Naive thymus-derived CD4-positive, alpha-beta T cell (primary cell): ENCODE measurements at regions of chr22 and their contacts with region 1.

Region 1: DNA sequence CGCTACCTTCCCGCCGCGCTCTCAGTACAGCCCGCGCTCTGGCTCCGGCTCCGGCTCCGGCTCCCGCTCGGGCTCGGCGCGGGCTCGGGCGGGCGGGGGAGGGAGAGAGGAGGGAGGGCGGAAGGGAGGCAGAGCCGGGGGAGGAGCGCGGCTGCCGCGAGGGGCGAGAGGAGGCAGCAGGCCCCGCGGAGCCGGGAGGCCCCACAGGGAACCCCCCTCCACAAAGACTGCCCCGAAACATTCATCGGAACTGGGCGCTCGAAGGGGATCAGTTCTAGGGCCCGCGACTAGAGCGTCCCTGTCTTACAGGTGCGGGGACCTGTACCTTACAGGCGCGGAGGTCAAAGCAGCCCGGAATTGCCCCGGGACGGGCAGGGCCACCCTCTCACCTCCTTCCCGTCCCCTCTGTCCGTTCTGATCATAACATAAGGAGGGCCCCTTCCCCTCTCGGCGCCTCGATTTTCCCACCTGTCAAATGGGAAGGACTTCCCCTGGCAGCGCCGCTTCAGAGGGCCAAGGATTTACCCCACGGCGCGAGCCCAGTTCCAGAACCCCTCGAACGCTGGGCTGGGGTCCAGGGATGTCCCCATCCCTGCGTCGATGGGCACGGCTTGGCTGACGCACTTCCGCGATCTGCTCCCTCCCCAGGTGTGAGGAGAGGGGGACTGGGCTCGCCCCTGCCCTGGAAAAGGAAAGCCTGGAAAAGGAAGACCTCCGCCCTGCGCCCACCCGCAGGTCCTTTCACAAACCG is at the start of gene SHISA8:
- DNase-seq: peak in 8 of 9 donors; percentile 41 to 72 (median 63)
- ATAC-seq: peak; percentile 70
- H3K4me3 ChIP-seq: peak within 1 kb of the TSS; percentile 41
- H3K4me3 Mint-ChIP-seq: peak within 1 kb of the TSS; percentile 44 to 83 (median 62)
- H3K27ac ChIP-seq: no peak within 1 kb of the TSS
- H3K27ac Mint-ChIP-seq: peak within 1 kb of the TSS in 3 of 9 donors; percentile 18 to 36 (median 33)
- H3K4me1 ChIP-seq: peaks cover 6 to 14% of the 10 kb centered on the region in 2 donors
- H3K4me1 Mint-ChIP-seq: peaks cover 4 to 28% (median 23%) of the 10 kb centered on the region in 7 donors
- H3K27me3 ChIP-seq: peaks cover 7 to 17% of the 10 kb centered on the region in 2 donors
- H3K27me3 Mint-ChIP-seq: peaks cover 25 to 58% (median 34%) of the 10 kb centered on the region in 5 donors
- total RNA-seq, gene SHISA8: 0.34 to 0.58 (median 0.54) TPM in 3 of 5 experiments, not detected in the others

Region 2: DNA sequence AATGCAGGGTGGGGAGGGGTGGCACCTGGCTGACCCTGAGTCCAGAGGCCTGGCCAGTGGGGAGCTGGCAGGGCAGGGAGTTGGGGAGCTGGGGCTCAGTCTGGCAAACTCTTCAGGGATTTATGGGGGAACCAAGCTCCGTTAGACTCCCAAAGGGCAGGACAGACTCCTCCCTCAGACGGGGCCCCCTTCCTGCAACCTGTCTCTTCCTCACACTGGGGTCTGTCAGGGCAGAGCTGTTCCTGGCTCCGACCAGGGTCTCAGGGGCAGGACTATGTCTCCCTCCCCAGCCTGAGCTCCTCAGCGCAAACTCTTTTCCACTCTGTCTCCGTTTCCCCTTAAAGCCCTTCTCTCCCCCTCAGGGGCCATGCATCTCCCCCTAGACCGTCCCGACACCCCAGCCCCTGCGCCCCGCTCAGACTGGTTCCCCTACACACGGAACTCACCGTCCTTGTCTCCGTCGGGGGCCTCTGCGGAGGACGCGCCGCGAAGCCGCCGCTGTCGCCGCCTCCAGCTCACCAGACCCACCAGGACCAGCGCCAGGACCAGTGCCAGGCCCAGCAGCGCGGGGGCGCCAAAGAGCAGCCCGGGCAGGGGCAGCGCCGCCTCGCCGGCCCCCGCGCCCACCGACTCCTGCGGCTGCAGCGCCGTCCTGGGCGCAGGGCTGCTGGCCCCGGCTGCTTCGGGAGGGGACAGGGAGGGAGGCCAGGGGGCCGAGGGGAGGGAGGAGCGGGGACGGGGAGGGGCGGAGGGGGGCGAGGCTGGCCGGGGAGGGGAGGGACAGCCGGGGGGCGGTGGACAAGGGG is 10.6 kb after region 1 on chr22:
- CTCF ChIA-PET with region 1: interaction called, 5 read pairs
- POLR2A ChIA-PET with region 1: interaction called, 14 read pairs
- intact Hi-C with region 1: loop called in 1 of 2 experiments (anchors 1 kb)
- DNase-seq: peak; percentile 52 to 88 (median 69)
- ATAC-seq: peak; percentile 89
- H3K4me3 ChIP-seq: peak overlapping the region; percentile 46
- H3K4me3 Mint-ChIP-seq: peak overlapping the region; percentile 67 to 86 (median 77)
- H3K27ac ChIP-seq: peak overlapping the region; percentile 8
- H3K27ac Mint-ChIP-seq: peak overlapping the region in 7 of 9 donors; percentile 32 to 71 (median 62)
- H3K4me1 ChIP-seq: no peaks in the 10 kb centered on the region
- H3K4me1 Mint-ChIP-seq: peaks cover 4 to 18% (median 12%) of the 10 kb centered on the region in 7 donors
- H3K27me3 ChIP-seq: no peaks in the 10 kb centered on the region
- H3K27me3 Mint-ChIP-seq: peaks cover 0 to 26% (median 5%) of the 10 kb centered on the region in 5 donors